ENCODE measurements at regions of chr2 and their contacts with region 1.

Region 1: DNA sequence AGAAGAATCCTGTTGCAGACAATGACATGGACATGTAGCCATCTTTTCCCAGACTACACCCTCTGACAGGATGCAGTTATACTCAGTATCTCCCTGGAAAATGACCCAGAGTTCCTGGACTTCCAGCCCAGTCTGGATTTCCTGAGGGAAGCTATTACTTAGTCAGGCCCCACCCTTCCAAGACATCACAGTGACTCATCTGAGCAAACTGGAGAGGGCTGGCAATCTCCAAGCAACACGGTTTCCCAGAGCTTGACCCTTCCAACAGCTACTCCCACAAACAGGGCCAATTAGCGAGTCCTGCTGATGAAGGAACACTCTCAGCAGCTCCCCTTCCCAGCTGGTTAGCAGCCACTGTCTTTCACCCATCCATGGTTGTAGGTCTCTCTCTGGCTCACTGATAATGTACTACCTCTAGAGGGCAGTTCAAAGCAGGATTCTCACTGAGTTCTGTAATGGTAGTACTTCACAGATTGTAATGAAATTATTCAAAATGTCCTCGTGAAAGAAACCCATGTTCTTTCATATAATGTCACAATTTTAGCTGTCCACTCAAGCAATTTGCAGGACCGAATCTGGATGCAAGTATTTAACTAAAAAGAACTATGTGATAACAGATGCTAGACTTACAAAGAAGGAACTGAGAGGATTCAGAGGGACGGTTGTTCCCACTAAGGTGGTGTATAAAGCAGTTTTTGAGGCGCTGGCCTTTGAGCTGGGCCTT is 110.2 kb downstream of the MDH1 start:
- DNase-seq: peak; percentile 78
- ATAC-seq: peak; percentile 94 to 99

Region 2: GRCh38 chr2:63790913-63791312 is 91.9 kb after region 1 on chr2:
- intact Hi-C with region 1: no loop called
- DNase-seq: peak; percentile 21
- ATAC-seq: peak; percentile 68 to 90

Region 3: GRCh38 chr2:63841254-63842022 is 142.5 kb after region 1 on chr2 and contains the start of gene UGP2:
- intact Hi-C with region 1: loop called in 1 of 2 experiments (anchors 5 kb)
- DNase-seq: peak; percentile 95
- ATAC-seq: peak; percentile 87 to 94
- total RNA-seq, gene UGP2: 303 TPM

Region 4: DNA sequence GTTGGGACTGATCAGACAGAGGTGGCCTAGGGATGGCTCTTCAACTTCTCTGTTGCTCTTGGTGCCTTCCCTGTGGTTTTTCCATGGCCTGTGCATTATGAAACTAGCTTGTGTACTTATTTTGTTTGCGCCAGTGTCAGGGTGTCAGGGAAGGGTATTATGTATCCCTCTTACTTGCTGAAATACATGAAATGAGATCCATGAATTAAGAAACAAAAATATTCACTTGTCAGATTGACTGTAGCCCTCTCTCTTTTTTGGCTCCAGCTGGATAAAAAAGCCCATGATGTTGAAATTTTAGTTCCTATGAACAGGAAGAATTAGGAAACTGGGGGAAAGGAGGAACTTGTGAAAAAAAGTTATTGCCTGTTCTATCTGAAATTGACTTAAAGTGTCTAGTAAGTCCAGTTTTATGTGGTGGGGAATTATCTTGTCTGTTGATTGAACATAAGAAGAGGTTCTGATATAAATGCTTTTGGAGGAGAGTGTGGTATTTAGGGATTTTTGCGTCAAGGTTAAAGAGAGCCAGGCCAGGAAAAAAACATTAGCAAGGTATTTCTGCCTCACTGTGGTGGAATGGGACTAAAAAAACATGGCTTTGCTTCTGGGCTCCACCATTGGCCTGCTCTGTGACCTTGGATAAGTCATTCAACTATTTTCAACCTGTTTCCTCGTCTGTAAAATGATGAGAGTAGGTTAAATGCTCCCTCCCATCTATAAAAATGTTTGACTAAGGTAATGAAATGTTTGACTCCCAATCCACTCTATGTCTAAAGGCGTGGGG is 154.7 kb after region 1 on chr2:
- intact Hi-C with region 1: no loop called
- DNase-seq: no peak
- ATAC-seq: peak; percentile 8 to 70

Measured in left cardiac atrium (tissue), 4 donors.